Activated T-helper 1 cell treated with anti-CD3 and anti-CD28 coated beads, Interleukin-12 subunit alpha, Interleukin-12 subunit beta, Interleukin-2, Interleukin-4 antibody, amounts not matched to agents 30 ng/mL and 10 ng/mL and 1 ng/mL, durations not matched to agents 14 hours and 24 hours and 36 hours (primary cell): ENCODE measurements at regions of chr19 and their contacts with region 1.

Region 1: GRCh38 chr19:54463531-54464043 is at the start of gene LENG9:
- DNase-seq: peak; percentile 96
- H3K4me3 Mint-ChIP-seq: peak within 1 kb of the TSS; percentile 84
- H3K27ac Mint-ChIP-seq: peak within 1 kb of the TSS; percentile 89
- H3K4me1 Mint-ChIP-seq: peaks cover 25% of the 10 kb centered on the region
- H3K27me3 Mint-ChIP-seq: peaks cover 21% of the 10 kb centered on the region
- total RNA-seq, gene LENG9: 8.4 and 11.5 TPM in 2 replicates

Region 2: GRCh38 chr19:54159352-54160181 is 304.0 kb before region 1 on chr19 and contains the start of gene LENG1:
- intact Hi-C with region 1: loop called (anchors 1 kb)
- DNase-seq: peak; percentile 99
- H3K4me3 Mint-ChIP-seq: peak within 1 kb of the TSS; percentile 95
- H3K27ac Mint-ChIP-seq: peak within 1 kb of the TSS; percentile 99
- H3K4me1 Mint-ChIP-seq: peaks cover 56% of the 10 kb centered on the region
- H3K27me3 Mint-ChIP-seq: peaks cover 4% of the 10 kb centered on the region
- total RNA-seq, gene LENG1: 5.8 and 6.6 TPM in 2 replicates

Region 3: DNA sequence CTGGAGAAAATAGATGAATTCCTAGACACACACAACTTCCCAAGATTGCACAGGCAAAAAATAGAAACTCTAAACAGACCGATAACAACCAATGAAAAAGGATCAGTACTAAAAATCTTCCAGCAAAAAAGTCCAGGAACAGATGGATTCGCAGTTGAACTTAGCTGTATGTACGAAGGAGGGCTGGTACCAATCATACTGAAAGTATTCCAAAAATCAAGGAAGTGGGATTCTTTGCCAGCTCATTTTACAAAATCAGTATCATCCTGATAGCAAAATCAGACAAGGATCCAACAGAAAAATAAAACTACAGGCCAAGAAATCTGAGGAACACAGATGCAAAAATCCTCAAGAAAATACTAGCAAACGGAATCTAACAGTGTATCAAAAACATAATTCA is 176.1 kb before region 1 on chr19:
- intact Hi-C with region 1: no loop called
- DNase-seq: no peak
- H3K4me3 Mint-ChIP-seq: no peak overlapping the region
- H3K27ac Mint-ChIP-seq: no peak overlapping the region
- H3K4me1 Mint-ChIP-seq: peaks cover 7% of the 10 kb centered on the region
- H3K27me3 Mint-ChIP-seq: peaks cover 11% of the 10 kb centered on the region

Region 4: GRCh38 chr19:54448774-54449700 is 14.6 kb before region 1 on chr19 and contains the start of gene LENG8:
- intact Hi-C with region 1: loop called (anchors 1 kb)
- DNase-seq: peak; percentile 96
- H3K4me3 Mint-ChIP-seq: peak within 1 kb of the TSS; percentile 99
- H3K27ac Mint-ChIP-seq: peak within 1 kb of the TSS; percentile 98
- H3K4me1 Mint-ChIP-seq: peaks cover 36% of the 10 kb centered on the region
- H3K27me3 Mint-ChIP-seq: no peaks in the 10 kb centered on the region
- total RNA-seq, gene LENG8: 192 and 193 TPM in 2 replicates

Region 5: GRCh38 chr19:54485851-54486250 is 22.3 kb after region 1 on chr19:
- intact Hi-C with region 1: no loop called
- DNase-seq: no peak
- H3K4me3 Mint-ChIP-seq: no peak overlapping the region
- H3K27ac Mint-ChIP-seq: no peak overlapping the region
- H3K4me1 Mint-ChIP-seq: peaks cover 14% of the 10 kb centered on the region
- H3K27me3 Mint-ChIP-seq: peaks cover 5% of the 10 kb centered on the region

Region 6: DNA sequence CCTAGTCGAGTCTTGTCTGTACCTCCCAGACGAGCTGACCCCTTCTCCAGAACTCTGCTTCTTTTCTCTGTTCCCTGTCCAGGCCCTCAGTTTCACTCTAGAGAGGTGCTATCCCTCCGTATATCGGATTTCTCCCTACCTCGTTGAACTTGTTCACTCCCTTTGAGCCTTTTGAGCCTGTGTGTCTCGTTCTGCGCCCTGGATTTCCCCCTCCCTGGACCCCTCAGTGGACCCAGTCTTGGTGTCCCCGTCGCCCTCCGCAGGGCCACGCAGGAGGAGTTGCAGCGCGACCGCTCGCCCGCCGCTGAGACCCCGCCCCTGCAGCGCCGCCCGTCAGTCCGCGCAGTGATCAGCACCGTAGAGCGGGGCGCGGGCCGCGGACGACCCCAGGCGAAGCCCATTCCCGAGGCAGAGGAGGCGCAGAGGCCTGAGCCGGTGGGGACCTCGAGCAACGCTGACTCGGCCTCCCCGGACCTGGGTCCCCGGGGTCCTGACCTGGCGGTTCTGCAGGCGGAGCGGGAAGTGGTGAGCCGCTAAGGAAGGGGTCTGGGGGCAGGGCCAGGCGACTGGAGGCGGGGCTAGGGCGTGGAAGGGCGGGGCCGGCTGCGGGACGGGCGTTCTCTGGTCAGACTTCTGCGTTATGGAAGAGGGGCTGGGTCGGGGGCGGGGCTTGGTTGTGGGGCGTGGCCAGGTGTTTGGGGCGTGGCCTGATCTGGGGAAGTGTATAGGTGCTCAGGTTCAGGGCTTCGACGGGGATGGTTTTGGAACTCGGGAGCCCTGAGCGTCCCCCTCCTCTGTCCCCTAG is 617.6 kb after region 1 on chr19:
- intact Hi-C with region 1: loop called (anchors 2 kb)
- DNase-seq: peak; percentile 92
- H3K4me3 Mint-ChIP-seq: peak overlapping the region; percentile 88
- H3K27ac Mint-ChIP-seq: peak overlapping the region; percentile 67
- H3K4me1 Mint-ChIP-seq: peaks cover 23% of the 10 kb centered on the region
- H3K27me3 Mint-ChIP-seq: peaks cover 35% of the 10 kb centered on the region

Region 7: DNA sequence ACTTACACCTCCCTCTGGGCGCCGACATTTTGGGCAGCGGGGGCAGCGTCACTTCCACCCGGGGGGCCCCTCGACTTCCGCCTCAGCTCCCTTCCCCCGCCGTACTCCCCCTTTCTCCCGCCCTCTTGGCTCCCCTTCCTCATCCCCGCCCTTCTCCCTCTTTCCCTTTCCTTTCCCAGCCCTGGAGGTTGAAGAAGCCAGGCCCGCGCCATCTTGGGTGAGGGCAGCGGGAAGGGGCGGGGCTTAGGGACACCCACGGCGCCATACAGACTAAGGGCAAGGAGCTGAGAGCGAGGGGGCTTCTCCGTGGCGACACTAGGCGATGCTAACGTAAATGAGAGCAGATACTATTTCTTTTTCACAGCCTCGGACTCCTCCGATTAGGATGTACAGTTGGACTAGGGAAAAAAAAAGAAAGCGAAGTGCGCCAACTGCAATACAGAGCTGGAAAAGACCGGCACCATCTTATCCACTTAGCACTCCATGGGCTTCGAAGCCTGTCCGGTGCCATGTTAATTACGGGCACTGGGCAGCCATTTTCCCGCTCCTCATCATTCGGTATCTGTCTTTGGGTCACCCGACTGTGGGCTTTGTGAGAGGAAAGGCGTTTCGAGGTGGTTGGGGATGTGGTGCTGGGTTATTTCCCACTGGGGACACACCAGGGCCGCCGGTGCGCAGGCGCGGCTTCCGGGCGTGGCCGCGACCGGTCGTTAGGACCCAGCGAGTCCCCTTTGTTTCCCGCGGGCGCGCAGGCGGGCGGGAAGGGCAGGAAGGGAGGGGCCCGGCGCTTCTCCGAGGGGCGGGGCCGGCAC is 1136.1 kb after region 1 on chr19 and contains the start of gene FIZ1:
- intact Hi-C with region 1: loop called (anchors 1 kb)
- DNase-seq: peak; percentile 95
- H3K4me3 Mint-ChIP-seq: peak within 1 kb of the TSS; percentile 93
- H3K27ac Mint-ChIP-seq: peak within 1 kb of the TSS; percentile 98
- H3K4me1 Mint-ChIP-seq: peaks cover 28% of the 10 kb centered on the region
- H3K27me3 Mint-ChIP-seq: no peaks in the 10 kb centered on the region
- total RNA-seq, gene FIZ1: 24.2 and 24.7 TPM in 2 replicates

Region 8: GRCh38 chr19:56140583-56141416 is 1677.2 kb after region 1 on chr19 and contains the start of gene ZNF444:
- intact Hi-C with region 1: loop called (anchors 2 kb)
- DNase-seq: peak; percentile 99
- H3K4me3 Mint-ChIP-seq: peak within 1 kb of the TSS; percentile 82
- H3K27ac Mint-ChIP-seq: peak within 1 kb of the TSS; percentile 84
- H3K4me1 Mint-ChIP-seq: peaks cover 37% of the 10 kb centered on the region
- H3K27me3 Mint-ChIP-seq: no peaks in the 10 kb centered on the region
- total RNA-seq, gene ZNF444: 33.8 and 36.5 TPM in 2 replicates